Heart right ventricle (tissue), 16 donors: ENCODE measurements at regions of chr3 and their contacts with region 1.

Region 1: DNA sequence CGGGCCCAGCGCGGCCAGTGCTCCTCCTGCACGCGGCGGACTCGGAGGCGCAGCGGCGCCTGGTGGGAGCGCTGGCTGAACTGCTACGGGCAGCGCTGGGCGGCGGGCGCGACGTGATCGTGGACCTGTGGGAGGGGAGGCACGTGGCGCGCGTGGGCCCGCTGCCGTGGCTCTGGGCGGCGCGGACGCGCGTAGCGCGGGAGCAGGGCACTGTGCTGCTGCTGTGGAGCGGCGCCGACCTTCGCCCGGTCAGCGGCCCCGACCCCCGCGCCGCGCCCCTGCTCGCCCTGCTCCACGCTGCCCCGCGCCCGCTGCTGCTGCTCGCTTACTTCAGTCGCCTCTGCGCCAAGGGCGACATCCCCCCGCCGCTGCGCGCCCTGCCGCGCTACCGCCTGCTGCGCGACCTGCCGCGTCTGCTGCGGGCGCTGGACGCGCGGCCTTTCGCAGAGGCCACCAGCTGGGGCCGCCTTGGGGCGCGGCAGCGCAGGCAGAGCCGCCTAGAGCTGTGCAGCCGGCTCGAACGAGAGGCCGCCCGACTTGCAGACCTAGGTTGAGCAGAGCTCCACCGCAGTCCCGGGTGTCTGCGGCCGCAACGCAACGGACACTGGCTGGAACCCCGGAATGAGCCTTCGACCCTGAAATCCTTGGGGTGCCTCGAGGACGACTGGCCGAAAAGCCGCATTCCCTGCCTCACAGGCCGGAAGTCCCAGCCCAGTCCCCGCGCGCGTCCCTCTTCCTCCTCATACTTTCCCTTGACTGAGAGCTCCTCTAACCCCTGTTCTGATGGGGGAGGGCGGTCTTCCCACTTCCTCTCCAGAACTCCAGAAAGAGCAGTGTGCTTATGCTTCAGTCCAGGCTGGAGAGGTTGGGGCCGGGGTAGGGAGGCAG is 1.4 kb upstream of the IL17RC start:
- DNase-seq: peak; percentile 77 to 78
- ATAC-seq: peak; percentile 51 to 77 (median 68)
- H3K4me3 ChIP-seq: peak overlapping the region; percentile 51 to 79 (median 65)
- H3K27ac ChIP-seq: peak overlapping the region; percentile 70 to 97 (median 88)
- H3K4me1 ChIP-seq: peaks cover 11 to 42% (median 30%) of the 10 kb centered on the region in 9 donors
- H3K27me3 ChIP-seq: no peaks in the 10 kb centered on the region
- CTCF ChIP-seq: peak in 7 of 9 donors; percentile 19 to 65 (median 45)

Region 2: GRCh38 chr3:9843715-9844438 is 71.6 kb before region 1 on chr3 and contains the start of gene RPUSD3:
- intact Hi-C with region 1: loop called in 3 of 10 experiments (anchors 5 to 10 kb)
- DNase-seq: peak; percentile 99
- ATAC-seq: peak; percentile 98 to 100 (median 100)
- H3K4me3 ChIP-seq: peak within 1 kb of the TSS; percentile 62 to 87 (median 76)
- H3K27ac ChIP-seq: peak within 1 kb of the TSS; percentile 68 to 90 (median 82)
- H3K4me1 ChIP-seq: peaks cover 0 to 18% (median 10%) of the 10 kb centered on the region in 9 donors
- H3K27me3 ChIP-seq: no peaks in the 10 kb centered on the region
- CTCF ChIP-seq: no peak
- total RNA-seq, gene RPUSD3: 26.4 to 42.3 (median 29.4) TPM

Region 3: DNA sequence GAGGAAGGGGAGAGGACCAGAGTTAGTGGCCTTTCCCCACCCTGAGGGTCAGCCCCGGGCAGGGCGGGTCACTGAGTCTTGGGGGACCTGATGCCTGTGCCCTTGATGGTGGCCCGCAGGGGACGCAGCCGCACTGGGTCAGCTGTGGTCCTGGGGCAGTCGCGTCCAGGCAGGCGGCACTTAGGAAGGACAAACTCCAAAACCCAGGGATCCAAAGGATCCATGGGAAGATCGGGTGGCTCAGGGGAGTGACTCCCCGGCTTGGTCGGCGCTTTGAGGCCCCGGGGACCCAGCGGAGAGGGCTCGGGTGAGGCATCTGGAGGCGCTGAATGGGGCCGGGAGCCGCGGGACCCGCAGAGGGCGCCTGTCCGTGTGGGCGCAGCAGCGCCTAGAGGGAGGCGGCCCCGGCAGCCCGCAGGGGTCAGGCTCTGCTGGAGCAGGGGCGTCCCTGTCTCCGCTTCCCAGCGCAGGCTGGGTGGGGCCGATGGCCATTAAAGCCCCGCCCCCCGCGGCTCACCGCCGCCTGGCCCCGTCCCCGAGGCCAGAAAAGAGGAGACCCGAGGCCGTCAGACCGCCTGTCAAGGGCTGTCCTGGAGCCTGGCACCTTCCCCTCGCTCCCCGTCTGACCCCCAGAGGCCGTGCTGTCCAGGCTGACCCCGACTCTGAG is 53.0 kb before region 1 on chr3:
- intact Hi-C with region 1: loop called in 1 of 10 experiments (anchors 5 kb)
- DNase-seq: peak; percentile 44 to 77
- ATAC-seq: peak; percentile 86 to 91 (median 88)
- H3K4me3 ChIP-seq: peak overlapping the region in 9 of 10 donors; percentile 22 to 63 (median 53)
- H3K27ac ChIP-seq: peak overlapping the region in 7 of 10 donors; percentile 28 to 54 (median 38)
- H3K4me1 ChIP-seq: peaks cover 3 to 29% (median 9%) of the 10 kb centered on the region in 9 donors
- H3K27me3 ChIP-seq: no peaks in the 10 kb centered on the region
- CTCF ChIP-seq: peak in 7 of 9 donors; percentile 43 to 70 (median 51)

Region 4: GRCh38 chr3:9946112-9947024 is 30.9 kb after region 1 on chr3:
- intact Hi-C with region 1: no loop called
- DNase-seq: peak; percentile 81 to 89
- ATAC-seq: peak; percentile 82 to 92 (median 88)
- H3K4me3 ChIP-seq: peak overlapping the region; percentile 39 to 86 (median 64)
- H3K27ac ChIP-seq: peak overlapping the region; percentile 29 to 88 (median 76)
- H3K4me1 ChIP-seq: peaks cover 0 to 24% (median 17%) of the 10 kb centered on the region in 9 donors
- H3K27me3 ChIP-seq: peaks cover 0 to 3% (median 0%) of the 10 kb centered on the region in 7 donors
- CTCF ChIP-seq: peak; percentile 65 to 87 (median 75)